ENCODE measurements at regions of chr6 and their contacts with region 1.

Region 1: DNA sequence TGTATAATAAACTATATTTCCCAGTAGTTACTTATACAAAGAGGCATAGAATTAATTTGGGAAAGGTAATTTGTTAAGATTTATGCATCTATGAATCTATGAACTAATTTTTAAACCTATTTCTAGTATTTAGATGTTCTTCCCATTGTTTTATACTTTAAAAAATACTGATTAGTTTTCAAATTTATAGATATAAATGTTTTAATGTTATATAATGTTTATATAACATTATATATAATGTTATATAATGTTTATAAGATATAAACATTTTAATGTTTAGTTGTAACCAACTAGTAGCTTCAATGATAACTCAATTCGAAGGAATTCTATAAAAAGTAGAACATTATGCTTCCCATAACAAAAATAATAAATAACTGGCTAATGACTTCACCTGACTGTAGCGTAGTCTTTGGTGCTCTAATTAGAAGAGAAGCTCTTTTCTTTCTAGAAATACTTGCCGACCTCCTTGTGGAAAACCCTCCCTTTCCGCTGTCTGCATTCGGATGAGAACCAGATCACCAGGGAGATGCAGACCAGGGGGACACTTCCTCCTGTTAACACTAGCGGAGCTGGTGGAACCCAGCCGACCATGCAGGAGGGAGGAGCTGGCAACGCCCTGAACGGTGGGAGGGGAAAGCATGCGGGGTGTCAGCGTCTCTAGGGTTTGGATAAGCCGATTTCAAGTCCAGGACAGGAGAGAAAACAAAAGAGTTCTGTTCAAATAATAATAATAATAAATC is 158.4 kb downstream of the OR2B2 start:
- DNase-seq: peak; percentile 75
- ATAC-seq: peak; percentile 63

Region 2: GRCh38 chr6:27518881-27519795 is 234.7 kb before region 1 on chr6:
- intact Hi-C with region 1: loop called (anchors 5 kb)
- DNase-seq: peak; percentile 65
- ATAC-seq: peak; percentile 95